Posterior cingulate gyrus (tissue), 11 donors: ENCODE measurements at regions of chr1 and their contacts with region 1.

Region 1: GRCh38 chr1:202926720-202927491 is at the start of gene KLHL12:
- DNase-seq: peak; percentile 93 to 99 (median 96)

Region 2: DNA sequence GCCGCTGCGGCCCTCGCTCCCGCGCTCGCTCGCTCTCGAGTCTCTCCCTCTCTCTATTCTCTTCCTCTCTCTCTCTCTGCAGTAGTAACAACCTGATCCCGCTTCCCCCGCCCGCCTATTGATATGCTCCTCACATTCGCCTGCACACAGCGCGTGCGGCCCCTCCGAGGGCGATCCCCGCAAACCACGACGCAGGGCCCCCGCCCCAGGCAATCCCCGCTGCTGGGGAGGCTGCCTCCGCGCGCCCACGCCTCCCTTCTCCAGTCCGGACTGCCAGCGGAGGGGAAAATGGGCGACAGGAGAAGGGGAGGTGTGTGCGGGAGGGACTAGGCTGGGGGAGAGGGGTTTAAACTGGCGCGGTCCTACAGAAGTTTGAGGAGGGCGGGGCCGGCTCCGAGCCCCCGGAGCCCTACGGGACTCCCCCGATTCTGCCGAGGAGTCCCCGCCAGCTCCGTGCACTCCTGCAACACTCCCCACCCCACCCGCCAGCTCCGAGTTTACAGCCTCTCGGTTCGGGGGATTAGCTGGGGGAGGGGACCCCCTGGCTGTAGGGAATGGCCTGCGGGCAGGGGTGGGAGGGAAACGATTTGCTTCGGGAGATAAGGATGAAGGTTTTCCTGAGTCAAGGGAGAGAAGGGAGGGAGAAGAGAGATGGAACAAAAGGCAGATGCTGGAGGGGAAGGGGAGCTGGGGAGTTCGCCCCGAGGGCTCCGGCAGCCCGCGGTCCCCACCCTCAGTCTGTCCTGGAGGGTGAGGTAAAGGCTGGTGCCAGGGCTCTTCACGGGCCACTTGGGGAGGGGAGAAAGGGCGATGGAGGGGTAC is 283.3 kb before region 1 on chr1:
- intact Hi-C with region 1: no loop called
- DNase-seq: peak in 1 of 10 donors; percentile 71

Region 3: GRCh38 chr1:202861420-202862200 is 65.3 kb before region 1 on chr1:
- intact Hi-C with region 1: loop called (anchors 2 kb)
- DNase-seq: peak; percentile 90 to 99 (median 94)

Region 4: DNA sequence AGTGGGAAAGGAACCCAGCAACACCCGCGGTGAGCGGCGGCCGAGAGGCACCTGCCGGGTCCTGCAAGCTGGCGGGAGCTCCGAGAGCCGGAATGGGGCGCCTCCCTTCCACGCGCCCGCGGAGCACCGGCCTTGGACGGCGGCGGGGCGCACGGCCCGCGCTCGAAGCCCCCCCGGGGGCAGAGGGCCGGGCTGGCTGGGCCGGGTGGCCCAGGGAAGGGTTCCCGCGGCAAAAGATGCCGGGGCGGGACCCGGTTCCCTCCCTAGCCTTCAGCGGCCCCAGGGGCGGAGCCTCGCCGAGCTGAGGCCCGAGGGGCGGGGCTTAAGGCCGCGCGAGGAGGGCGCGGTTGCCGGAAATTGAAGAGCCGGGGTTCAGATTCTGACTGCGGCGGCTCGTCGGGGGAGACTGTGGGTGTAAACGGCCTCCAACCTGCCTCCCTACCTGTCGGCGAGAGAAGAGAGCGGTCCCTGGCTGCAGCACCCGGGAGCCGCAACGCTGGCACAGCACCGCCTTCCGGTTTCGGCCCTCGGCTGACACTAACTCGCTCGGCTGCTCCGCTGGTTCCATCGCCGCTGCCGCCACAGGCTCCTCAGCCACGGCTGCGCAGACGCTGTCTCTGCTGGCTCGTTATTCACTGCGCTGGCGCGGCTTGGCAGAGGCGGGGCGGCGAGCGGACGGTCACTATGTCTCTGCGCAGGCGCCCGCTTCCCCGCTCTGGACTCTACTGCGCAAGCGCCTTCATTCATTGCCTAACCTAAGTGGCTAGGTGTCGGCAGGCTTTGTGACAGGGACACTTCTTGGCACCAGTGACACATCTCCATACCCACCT is 38.2 kb before region 1 on chr1 and contains the start of gene RABIF:
- intact Hi-C with region 1: loop called (anchors 2 kb)
- DNase-seq: peak; percentile 93 to 99 (median 96)

Region 5: GRCh38 chr1:202957733-202958543 is 31.0 kb after region 1 on chr1 and contains the start of gene ADIPOR1:
- intact Hi-C with region 1: loop called (anchors 5 kb)
- DNase-seq: peak; percentile 84 to 99 (median 93)

Region 6: GRCh38 chr1:202968840-202969295 is 42.0 kb after region 1 on chr1:
- intact Hi-C with region 1: loop called (anchors 5 kb)
- DNase-seq: peak in 3 of 10 donors; percentile 11 to 22 (median 18)

Region 7: DNA sequence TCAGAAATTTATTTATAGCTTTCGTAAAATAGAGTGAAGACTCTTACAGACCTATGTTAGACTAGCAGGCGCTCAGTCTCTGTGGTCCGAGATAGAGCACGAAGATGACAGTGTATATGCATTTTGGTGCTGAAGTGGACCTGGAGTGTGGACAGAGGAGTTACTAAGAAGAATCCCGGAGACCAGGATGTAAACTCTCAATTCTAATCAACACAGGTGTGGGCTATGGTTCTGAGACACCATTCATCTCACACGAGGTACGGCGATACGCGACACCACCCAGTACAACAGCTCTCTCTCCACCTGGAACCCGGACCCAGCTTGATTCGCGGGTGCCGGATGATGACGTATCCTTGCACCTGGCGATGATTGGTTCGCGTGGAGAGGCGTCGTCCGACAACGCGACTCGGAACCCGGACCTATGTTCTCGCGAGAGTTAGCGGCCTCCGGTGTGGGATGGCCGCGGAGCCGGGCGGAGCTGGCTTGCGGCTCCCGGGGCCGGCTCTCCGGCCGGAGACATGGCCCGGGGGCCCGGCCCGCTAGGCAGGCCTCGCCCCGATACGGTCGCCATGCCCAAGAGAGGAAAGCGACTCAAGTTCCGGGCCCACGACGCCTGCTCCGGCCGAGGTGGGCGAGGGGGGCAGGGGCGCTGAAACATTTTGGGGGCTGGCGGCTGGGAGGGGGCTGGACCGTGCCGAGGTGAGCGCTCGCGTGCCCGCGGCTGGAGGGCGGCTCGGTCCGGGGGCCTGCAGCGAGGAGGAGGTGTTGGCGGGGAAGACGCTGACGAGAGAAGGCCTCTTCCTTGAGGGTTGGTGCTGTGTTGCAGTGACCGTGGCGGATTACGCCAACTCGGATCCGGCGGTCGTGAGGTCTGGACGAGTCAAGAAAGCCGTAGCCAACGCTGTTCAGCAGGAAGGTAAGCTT is 80.3 kb after region 1 on chr1 and contains the start of gene TMEM183A:
- intact Hi-C with region 1: loop called (anchors 2 kb)
- DNase-seq: peak; percentile 94 to 99 (median 96)

Region 8: DNA sequence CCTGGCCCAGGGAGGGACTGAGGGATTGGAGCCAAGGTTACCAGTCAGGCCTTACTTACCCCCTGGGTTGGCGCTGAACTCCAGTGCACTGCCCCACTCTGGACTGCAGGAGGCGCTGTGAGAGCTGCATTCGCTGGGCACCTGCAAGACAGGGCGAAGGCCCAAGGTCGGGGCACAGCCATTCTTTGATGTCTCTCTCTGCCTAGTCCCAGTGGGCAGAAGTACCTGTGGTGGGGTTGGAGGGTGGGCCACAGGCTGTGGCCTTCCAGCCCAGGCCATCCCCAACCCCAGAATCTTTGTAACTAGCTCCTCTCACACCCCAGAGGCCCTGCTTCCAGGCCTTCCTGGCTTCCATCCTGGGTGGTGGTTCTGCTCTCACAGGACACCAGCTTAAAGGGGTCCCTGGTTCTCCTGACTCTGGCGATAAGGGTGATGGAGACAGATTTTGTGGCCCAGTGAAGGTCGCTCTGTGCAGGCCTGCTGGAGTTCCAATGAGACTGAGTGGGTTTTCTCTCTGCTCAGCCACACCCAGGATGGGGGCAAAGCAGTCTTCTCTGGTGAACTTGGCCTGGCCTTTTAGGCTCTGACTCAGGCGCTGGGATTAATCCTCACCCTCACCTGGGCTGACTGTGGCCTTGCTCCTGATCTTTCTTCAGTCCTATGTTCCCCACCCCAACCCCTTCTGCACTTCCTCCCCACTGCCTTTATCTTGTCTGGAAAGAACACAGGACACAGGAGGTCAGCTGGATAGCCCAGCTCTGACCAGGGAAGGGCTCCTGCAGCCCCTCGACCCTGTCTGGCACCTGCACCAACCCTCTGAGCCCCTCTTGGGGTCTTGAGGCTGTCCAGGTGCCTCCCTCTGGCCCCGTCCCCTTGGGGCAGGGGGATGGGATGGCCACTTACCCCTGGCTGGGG is 157.9 kb after region 1 on chr1:
- intact Hi-C with region 1: no loop called
- DNase-seq: no peak

Region 9: DNA sequence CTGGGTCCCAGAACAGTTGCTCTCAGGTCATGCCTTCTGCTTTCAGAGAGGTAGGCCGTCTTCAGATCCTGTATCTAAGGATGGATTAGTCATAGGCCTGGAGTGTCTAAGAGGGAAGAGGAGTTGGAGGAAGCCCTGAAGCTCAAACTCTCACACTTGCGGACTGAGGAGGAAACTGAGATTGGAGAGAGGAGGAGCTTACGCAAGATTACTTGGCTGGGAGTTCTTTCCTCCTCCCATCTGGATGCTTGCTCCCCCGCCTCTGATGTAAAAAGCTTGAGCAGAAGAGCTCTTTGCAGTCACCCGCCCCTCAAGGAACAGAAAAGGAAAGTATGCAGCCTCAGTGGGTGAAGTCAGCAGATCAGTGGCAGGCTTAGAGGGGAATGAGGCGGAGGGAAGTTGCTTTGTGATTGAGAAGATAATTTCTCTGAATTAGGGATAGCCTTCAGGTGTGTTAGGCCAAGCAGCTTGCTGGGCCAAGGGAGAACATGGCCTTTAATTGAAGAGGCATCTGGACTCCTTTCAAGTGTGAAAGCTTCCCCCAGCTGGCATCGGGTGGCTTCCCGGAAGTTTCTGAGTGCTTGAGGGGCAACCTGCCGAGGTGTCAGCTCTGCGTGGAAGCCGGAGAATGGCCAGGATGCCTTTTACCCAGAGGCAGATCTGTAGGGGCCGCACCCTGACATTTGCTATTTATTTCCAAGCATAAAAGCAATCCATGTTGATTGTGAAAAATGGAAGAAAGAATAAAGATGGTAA is 207.2 kb after region 1 on chr1:
- intact Hi-C with region 1: no loop called
- DNase-seq: peak in 3 of 10 donors; percentile 73 to 90 (median 75)